Psoas muscle (tissue), 8 donors: ENCODE measurements at regions of chr3 and their contacts with region 1.

Region 1: DNA sequence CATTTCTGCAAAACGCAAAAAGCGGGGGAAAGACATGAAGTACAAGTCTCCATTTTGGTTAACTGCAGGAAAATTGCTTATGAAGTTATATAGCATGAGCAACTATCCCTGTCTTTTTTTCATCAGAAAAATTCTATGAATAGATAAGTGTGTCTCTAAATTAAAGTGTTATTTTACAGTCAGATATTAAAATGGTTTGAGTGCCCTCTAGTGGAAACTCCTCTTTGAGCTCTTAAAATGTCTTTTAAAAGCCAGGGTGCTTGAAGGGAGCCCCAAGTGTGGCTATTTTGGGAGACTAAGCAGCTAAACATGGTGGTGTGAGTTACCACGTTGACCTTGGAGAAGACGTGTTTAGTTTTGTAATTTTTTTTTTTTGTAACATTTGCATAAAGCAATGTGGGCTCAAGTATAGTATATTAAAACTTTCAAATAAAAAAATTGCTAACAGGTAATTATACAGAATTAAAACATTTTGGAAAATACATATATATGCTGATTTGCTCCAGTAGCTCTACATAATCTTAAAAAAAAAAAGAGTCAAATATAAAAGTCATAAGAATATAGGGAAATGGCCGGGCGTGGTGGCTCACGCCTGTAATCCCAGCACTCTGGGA is 77.2 kb downstream of the PPP2R3A start:
- DNase-seq: no peak
- ATAC-seq: peak in 3 of 4 donors; percentile 58 to 79 (median 69)
- H3K4me3 ChIP-seq: no peak overlapping the region
- H3K27ac ChIP-seq: peak overlapping the region; percentile 11
- H3K4me1 ChIP-seq: peaks cover 18% of the 10 kb centered on the region
- H3K27me3 ChIP-seq: no peaks in the 10 kb centered on the region
- CTCF ChIP-seq: peak; percentile 70

Region 2: GRCh38 chr3:135918580-135918962 is 124.1 kb before region 1 on chr3:
- intact Hi-C with region 1: loop called (anchors 1 to 2 kb)
- DNase-seq: no peak
- ATAC-seq: peak; percentile 77 to 92 (median 82)
- H3K4me3 ChIP-seq: no peak overlapping the region
- H3K27ac ChIP-seq: no peak overlapping the region
- H3K4me1 ChIP-seq: peaks cover 11% of the 10 kb centered on the region
- H3K27me3 ChIP-seq: no peaks in the 10 kb centered on the region
- CTCF ChIP-seq: peak; percentile 69